B cell (primary cell): ENCODE measurements at regions of chr22 and their contacts with region 1.

Region 1: GRCh38 chr22:39405346-39406085 is 5.9 kb downstream of the TAB1 start:
- DNase-seq: no peak
- ATAC-seq: no peak
- H3K4me3 ChIP-seq: no peak overlapping the region
- H3K4me3 Mint-ChIP-seq: no peak overlapping the region
- H3K27ac ChIP-seq: no peak overlapping the region
- H3K27ac Mint-ChIP-seq: no peak overlapping the region
- H3K4me1 ChIP-seq: peaks cover 6 to 9% of the 10 kb centered on the region in 2 donors
- H3K4me1 Mint-ChIP-seq: peaks cover 30% of the 10 kb centered on the region
- H3K27me3 ChIP-seq: no peaks in the 10 kb centered on the region
- H3K27me3 Mint-ChIP-seq: no peaks in the 10 kb centered on the region
- CTCF ChIP-seq: no peak

Region 2: DNA sequence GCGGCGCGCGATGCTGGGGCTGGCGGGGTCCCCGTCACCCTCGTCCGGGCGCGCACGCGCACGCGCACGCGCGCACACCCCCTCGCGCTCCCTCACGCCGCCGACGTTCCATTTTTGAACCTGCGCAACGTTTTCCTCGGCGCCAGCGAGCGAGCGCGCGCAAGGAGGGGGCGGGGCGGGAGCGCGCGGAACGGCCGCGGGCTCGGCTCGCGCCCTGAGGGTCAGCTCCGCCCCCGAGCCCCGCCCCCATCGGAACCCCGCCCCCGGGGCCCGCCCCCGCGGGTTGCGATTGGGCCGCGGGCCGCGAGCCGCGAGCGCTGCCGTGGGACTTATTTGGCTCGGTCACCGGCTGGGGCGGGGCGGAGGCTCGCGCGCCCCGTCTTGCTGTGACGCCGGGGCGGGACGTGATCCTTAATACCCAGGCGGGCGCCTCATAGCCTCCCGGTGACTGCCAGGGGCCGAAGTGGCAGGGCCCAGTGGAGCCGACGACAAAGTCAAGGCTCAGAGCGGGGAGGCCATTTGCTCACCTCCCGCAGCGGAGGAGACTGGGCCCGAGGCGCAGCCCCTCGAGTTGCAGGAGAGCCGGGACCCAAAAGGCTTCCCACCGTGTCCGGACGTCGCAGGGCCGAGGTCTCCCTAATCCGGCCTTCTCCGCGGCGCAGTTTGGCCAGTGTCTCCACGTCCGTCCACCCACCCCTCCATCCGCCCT is 252.9 kb before region 1 on chr22 and contains the start of gene CBX7:
- CTCF ChIA-PET with region 1: no interaction called
- POLR2A ChIA-PET with region 1: no interaction called
- intact Hi-C with region 1: loop called (anchors 5 kb)
- DNase-seq: peak; percentile 96
- ATAC-seq: peak; percentile 88
- H3K4me3 ChIP-seq: peak within 1 kb of the TSS; percentile 53 to 97 (median 87)
- H3K4me3 Mint-ChIP-seq: peak within 1 kb of the TSS; percentile 90
- H3K27ac ChIP-seq: peak within 1 kb of the TSS; percentile 81 to 97
- H3K27ac Mint-ChIP-seq: peak within 1 kb of the TSS; percentile 90
- H3K4me1 ChIP-seq: peaks cover 51 to 53% of the 10 kb centered on the region in 2 donors
- H3K4me1 Mint-ChIP-seq: peaks cover 43% of the 10 kb centered on the region
- H3K27me3 ChIP-seq: peaks cover 0 to 14% (median 8%) of the 10 kb centered on the region in 4 experiments
- H3K27me3 Mint-ChIP-seq: peaks cover 33% of the 10 kb centered on the region
- CTCF ChIP-seq: no peak
- total RNA-seq, gene CBX7: 141 and 147 TPM in 2 replicates

Region 3: GRCh38 chr22:39502109-39502788 is 96.7 kb after region 1 on chr22 and contains the start of gene MIEF1:
- CTCF ChIA-PET with region 1: no interaction called
- POLR2A ChIA-PET with region 1: interaction called, 11 read pairs
- intact Hi-C with region 1: no loop called
- DNase-seq: peak; percentile 93
- ATAC-seq: peak; percentile 98
- H3K4me3 ChIP-seq: peak within 1 kb of the TSS; percentile 48 to 85 (median 83)
- H3K4me3 Mint-ChIP-seq: peak within 1 kb of the TSS; percentile 96
- H3K27ac ChIP-seq: peak within 1 kb of the TSS; percentile 45 to 74
- H3K27ac Mint-ChIP-seq: peak within 1 kb of the TSS; percentile 93
- H3K4me1 ChIP-seq: peaks cover 16 to 25% of the 10 kb centered on the region in 2 donors
- H3K4me1 Mint-ChIP-seq: peaks cover 39% of the 10 kb centered on the region
- H3K27me3 ChIP-seq: no peaks in the 10 kb centered on the region
- H3K27me3 Mint-ChIP-seq: no peaks in the 10 kb centered on the region
- CTCF ChIP-seq: no peak
- total RNA-seq, gene MIEF1: 37.2 and 43.4 TPM in 2 replicates